ENCODE measurements at regions of chr14 and their contacts with region 1.

Region 1: DNA sequence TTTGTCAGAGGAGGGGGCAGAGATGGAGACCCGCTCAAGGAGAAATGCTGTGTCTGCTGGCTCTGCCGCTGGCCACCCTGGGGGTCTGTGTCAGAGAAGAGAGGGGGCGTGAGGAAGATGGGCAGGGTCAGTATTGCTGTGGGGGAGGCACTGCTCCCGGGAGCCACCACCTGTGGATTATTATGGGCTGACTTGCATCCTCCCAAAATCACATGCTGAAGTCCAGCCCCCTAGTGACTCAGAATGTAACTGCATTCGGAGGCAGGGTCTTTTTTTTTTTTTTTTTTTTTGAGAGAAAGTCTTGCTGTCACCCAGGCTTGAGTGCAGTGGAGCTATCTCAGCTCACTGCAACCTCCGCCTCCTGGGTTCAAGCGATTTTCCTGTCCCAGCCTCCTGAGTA is 12.3 kb downstream of the ABCD4 start:
- DNase-seq: peak; percentile 60
- H3K4me3 ChIP-seq: no peak overlapping the region
- H3K27ac ChIP-seq: no peak overlapping the region
- H3K4me1 ChIP-seq: no peaks in the 10 kb centered on the region
- H3K27me3 ChIP-seq: no peaks in the 10 kb centered on the region
- CTCF ChIP-seq: peak; percentile 63

Region 2: DNA sequence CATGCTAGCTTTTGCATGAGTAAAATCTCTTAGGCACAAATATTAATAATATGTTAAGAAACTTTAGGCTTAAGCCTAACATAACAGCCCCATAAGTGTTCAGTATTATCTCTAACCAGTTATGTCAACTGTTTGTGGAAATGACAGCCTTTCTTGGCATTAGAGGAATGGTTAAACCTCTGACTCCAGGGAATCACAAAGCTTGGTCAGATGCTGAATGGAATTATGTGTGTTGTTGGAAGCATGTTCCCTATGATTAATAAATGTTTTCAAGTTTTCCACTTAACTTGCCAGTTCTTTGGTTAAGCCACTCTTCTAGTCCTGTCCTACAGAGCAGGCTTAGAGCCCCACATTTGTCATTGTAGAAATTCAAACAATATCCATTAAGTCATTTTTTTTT is 1137.1 kb before region 1 on chr14:
- CTCF ChIA-PET with region 1: interaction called, 12 read pairs
- POLR2A ChIA-PET with region 1: no interaction called
- intact Hi-C with region 1: no loop called
- DNase-seq: no peak
- H3K4me3 ChIP-seq: no peak overlapping the region
- H3K27ac ChIP-seq: no peak overlapping the region
- H3K4me1 ChIP-seq: no peaks in the 10 kb centered on the region
- H3K27me3 ChIP-seq: no peaks in the 10 kb centered on the region
- CTCF ChIP-seq: no peak

Region 3: GRCh38 chr14:74244115-74244514 is 46.3 kb before region 1 on chr14:
- CTCF ChIA-PET with region 1: no interaction called
- POLR2A ChIA-PET with region 1: no interaction called
- intact Hi-C with region 1: no loop called
- DNase-seq: no peak
- H3K4me3 ChIP-seq: no peak overlapping the region
- H3K27ac ChIP-seq: no peak overlapping the region
- H3K4me1 ChIP-seq: no peaks in the 10 kb centered on the region
- H3K27me3 ChIP-seq: peaks cover 54% of the 10 kb centered on the region
- CTCF ChIP-seq: no peak; the same call in 1 of the 2 replicates

Region 4: GRCh38 chr14:74275241-74275841 is 15.1 kb before region 1 on chr14:
- CTCF ChIA-PET with region 1: no interaction called
- POLR2A ChIA-PET with region 1: interaction called, 13 read pairs
- intact Hi-C with region 1: no loop called
- DNase-seq: peak; percentile 78
- H3K4me3 ChIP-seq: no peak overlapping the region
- H3K27ac ChIP-seq: peak overlapping the region; percentile 31
- H3K4me1 ChIP-seq: peaks cover 8% of the 10 kb centered on the region
- H3K27me3 ChIP-seq: no peaks in the 10 kb centered on the region
- CTCF ChIP-seq: no peak